ENCODE measurements at regions of chr17 and their contacts with region 1.

Region 1: GRCh38 chr17:68777243-68777855 is 176.2 kb upstream of the FAM20A start:
- DNase-seq: peak; percentile 42
- ATAC-seq: peak; percentile 79 to 88

Region 2: GRCh38 chr17:69235338-69235930 is 458.1 kb after region 1 on chr17:
- intact Hi-C with region 1: loop called (anchors 5 kb)
- DNase-seq: peak; percentile 84
- ATAC-seq: peak; percentile 92 to 94

Measured in left cardiac atrium (tissue), 4 donors.